HCT116 (cell line): ENCODE measurements at regions of chr13 and their contacts with region 1.

Region 1: GRCh38 chr13:97141564-97142005 is 80.5 kb upstream of the MBNL2 start:
- DNase-seq: peak; percentile 90
- ATAC-seq: peak; percentile 88
- H3K4me3 ChIP-seq: peak overlapping the region; percentile 48 to 63
- H3K27ac ChIP-seq: peak overlapping the region; percentile 76
- H3K4me1 ChIP-seq: peaks cover 22 to 40% of the 10 kb centered on the region in 2 experiments
- H3K27me3 ChIP-seq: no peaks in the 10 kb centered on the region
- CTCF ChIP-seq: no peak
- POLR2A ChIP-seq: no peak
- RAD21 ChIP-seq: peak; percentile 32

Region 2: DNA sequence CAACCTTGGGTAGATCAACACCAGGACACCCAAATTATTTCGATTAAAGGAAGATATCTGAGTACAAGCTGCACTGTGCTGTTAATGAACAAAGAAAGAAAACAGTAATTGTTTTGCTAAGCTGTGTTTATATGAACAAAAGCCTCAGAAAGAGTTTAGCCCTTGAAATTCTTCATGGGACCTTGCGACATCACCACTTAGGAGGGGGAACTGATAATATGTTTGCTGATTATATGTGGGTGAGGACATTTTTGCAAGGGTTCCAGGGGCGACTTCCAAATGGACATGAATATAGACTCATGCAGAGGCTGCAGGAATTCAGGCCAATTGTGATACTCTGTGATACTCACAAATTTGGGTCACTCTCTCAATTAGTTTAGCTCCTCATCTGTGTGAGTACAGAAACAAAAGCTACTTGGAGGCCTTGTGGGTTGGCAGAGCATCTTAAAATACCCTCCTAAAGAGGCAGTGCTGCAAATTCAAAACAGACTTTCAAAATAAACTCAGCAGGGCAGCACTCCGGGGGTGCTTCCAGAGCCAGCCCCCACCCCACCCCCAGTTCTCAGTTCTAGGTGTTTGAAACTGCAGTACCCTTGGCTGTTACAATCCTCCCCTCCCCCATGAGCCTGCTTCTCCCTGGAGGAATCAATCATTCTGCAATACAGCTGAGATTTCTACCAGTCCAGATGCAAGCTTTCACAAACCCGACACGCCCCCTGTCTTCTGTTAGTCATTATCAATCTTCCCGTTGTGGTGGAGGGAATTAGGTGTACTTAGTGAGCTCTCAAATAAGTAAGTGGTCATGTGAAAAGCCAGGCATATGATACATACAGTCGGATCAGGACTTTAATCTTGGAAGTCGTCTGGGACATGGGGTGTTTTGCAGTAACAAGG is 16.4 kb before region 1 on chr13:
- CTCF ChIA-PET with region 1: interaction called, 6 read pairs
- POLR2A ChIA-PET with region 1: interaction called, 16 read pairs
- RAD21 ChIA-PET with region 1: interaction called in 1 of 2 experiments, 3 read pairs
- intact Hi-C with region 1: no loop called
- DNase-seq: peak; percentile 75
- ATAC-seq: peak; percentile 61
- H3K4me3 ChIP-seq: peak overlapping the region; percentile 11 to 19; a peak in 3 of 4 replicates
- H3K27ac ChIP-seq: no peak overlapping the region
- H3K4me1 ChIP-seq: peaks cover 51 to 64% of the 10 kb centered on the region in 2 experiments
- H3K27me3 ChIP-seq: no peaks in the 10 kb centered on the region
- CTCF ChIP-seq: peak in 2 of 3 experiments; percentile 5 to 12; a peak in 1 of 6 replicates
- POLR2A ChIP-seq: no peak
- RAD21 ChIP-seq: no peak

Region 3: DNA sequence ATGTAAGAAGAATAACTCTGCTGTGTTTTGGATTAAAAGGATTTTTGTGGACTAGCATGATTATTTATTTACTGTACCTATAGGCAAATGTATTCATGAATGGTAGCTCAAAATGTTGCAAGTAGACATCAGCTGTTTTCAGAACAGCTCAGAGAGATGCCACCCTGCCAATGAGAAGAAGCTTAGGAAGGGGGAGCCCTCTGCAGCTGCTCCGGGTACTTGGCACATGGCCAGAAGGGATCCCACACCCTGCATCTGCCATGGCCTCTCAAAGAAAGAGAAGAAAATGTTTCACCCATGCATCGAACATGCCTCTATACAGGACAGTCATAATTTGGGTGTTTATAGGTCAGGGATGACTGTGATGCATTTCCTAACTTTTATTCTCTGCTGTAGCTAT is 50.0 kb after region 1 on chr13:
- CTCF ChIA-PET with region 1: no interaction called
- POLR2A ChIA-PET with region 1: interaction called, 10 read pairs
- RAD21 ChIA-PET with region 1: no interaction called
- intact Hi-C with region 1: no loop called
- DNase-seq: no peak
- ATAC-seq: no peak
- H3K4me3 ChIP-seq: no peak overlapping the region
- H3K27ac ChIP-seq: no peak overlapping the region
- H3K4me1 ChIP-seq: peaks cover 19 to 54% of the 10 kb centered on the region in 2 experiments
- H3K27me3 ChIP-seq: no peaks in the 10 kb centered on the region
- CTCF ChIP-seq: no peak
- POLR2A ChIP-seq: no peak
- RAD21 ChIP-seq: no peak

Region 4: DNA sequence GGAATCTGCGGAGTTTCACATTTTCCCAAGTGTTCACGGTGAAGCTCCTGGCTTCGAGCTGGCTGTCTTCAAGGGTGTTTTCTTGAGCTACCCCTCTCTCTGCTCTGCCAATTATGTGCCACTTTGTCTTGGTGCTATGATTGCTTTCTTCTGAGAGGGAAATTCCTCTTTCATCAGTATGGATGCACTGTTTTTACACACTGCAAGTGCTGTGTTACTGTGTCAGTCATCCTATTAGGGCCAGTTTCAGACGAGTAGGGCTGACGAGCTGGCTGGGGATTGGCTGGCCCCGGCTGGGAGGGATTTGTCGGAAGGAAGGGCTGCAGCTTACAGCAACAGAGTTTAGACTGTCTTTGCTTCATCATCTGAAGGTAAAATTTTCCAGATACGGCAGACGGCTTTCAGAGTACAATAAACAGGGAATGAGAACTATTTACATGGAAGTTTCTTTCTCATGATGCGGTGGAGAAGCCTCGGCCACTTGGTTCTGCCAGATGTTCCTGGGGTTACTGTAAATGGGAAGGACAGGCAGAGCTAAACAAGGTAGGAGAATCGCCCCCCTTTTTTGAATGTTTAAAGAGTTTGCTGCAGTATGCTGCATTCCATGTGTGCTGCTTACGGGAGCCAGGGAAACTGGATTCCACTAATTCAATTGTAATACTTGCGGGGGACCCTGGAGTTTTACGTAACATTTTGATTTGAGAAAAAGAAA is 80.6 kb after region 1 on chr13 and contains the start of gene MBNL2:
- CTCF ChIA-PET with region 1: interaction called, 3 read pairs
- POLR2A ChIA-PET with region 1: interaction called, 16 read pairs
- RAD21 ChIA-PET with region 1: no interaction called
- intact Hi-C with region 1: no loop called
- DNase-seq: peak; percentile 81
- ATAC-seq: peak; percentile 99
- H3K4me3 ChIP-seq: peak within 1 kb of the TSS; percentile 74 to 85
- H3K27ac ChIP-seq: peak within 1 kb of the TSS; percentile 74
- H3K4me1 ChIP-seq: peaks cover 45 to 47% of the 10 kb centered on the region in 2 experiments
- H3K27me3 ChIP-seq: no peaks in the 10 kb centered on the region
- CTCF ChIP-seq: no peak
- POLR2A ChIP-seq: no peak
- RAD21 ChIP-seq: 0 out of 2 replicates have a peak, but pooled peaks have one; percentile 14
- total RNA-seq, gene MBNL2: 73.9 TPM

Region 5: GRCh38 chr13:97257800-97258799 is 116.5 kb after region 1 on chr13:
- CTCF ChIA-PET with region 1: interaction called, 3 read pairs
- POLR2A ChIA-PET with region 1: interaction called, 17 read pairs
- RAD21 ChIA-PET with region 1: no interaction called
- intact Hi-C with region 1: loop called (anchors 5 kb)
- DNase-seq: peak; percentile 93
- ATAC-seq: peak; percentile 66
- H3K4me3 ChIP-seq: peak overlapping the region in 1 of 2 experiments; percentile 39; a peak in 3 of 4 replicates
- H3K27ac ChIP-seq: peak overlapping the region; percentile 100
- H3K4me1 ChIP-seq: peaks cover 90 to 97% of the 10 kb centered on the region in 2 experiments
- H3K27me3 ChIP-seq: no peaks in the 10 kb centered on the region
- CTCF ChIP-seq: peak in 2 of 3 experiments; percentile 33 to 35; a peak in 2 of 6 replicates
- POLR2A ChIP-seq: no peak
- RAD21 ChIP-seq: no peak